Mucosa of descending colon (tissue), 3 donors: ENCODE measurements at regions of chr3 and their contacts with region 1.

Region 1: GRCh38 chr3:73624821-73625665 is at the start of gene PDZRN3:
- DNase-seq: peak in 2 of 3 donors; percentile 80
- ATAC-seq: peak; percentile 80
- H3K4me3 ChIP-seq: peak within 1 kb of the TSS; percentile 41
- H3K4me1 ChIP-seq: no peaks in the 10 kb centered on the region
- CTCF ChIP-seq: no peak
- total RNA-seq, gene PDZRN3: 17.9 to 147 (median 18.5) TPM

Region 2: GRCh38 chr3:73511571-73512525 is 113.2 kb before region 1 on chr3:
- intact Hi-C with region 1: loop called in 1 of 2 experiments (anchors 10 kb)
- DNase-seq: peak in 1 of 3 donors; percentile 41
- ATAC-seq: peak; percentile 32
- H3K4me3 ChIP-seq: no peak overlapping the region
- H3K4me1 ChIP-seq: peaks cover 50% of the 10 kb centered on the region
- CTCF ChIP-seq: no peak

Region 3: DNA sequence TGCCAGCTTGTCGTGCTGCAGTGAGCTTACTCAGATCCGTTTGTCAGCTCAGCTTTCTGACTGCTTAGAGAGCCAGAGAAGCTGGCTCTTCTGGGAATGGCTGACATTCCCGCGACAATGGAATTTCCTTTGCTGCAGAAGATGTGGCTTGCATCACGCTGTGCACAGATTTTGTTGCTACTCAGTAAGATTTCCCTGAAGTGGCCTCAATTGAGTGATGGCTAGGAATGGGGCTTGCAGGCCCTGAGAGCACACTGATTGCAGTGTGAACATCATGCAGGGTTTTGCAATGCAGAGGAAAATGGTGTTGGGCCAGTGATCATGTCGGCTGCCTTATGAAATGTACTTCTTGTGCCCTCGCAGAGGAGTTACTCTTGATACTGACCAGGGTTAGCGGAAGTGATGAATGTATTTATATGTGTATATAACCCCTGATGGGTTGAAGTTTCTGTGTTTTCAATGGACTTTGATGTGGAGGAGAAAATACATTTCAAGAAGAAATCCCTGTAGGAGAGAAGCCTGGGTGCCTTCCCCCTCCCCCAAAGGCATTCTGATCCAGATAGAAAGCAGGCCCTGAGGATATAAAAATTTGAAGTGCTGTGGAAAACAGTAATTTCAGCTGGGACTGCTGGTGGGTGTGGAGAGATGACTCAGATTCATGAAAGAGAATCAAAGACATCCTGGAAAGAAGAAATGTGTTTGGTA is 102.2 kb after region 1 on chr3:
- intact Hi-C with region 1: loop called in 1 of 2 experiments (anchors 10 kb)
- DNase-seq: peak in 1 of 3 donors; percentile 14
- ATAC-seq: peak; percentile 25
- H3K4me3 ChIP-seq: no peak overlapping the region
- H3K4me1 ChIP-seq: no peaks in the 10 kb centered on the region
- CTCF ChIP-seq: no peak